Sigmoid colon (tissue), 7 donors: ENCODE measurements at regions of chr1 and their contacts with region 1.

Region 1: DNA sequence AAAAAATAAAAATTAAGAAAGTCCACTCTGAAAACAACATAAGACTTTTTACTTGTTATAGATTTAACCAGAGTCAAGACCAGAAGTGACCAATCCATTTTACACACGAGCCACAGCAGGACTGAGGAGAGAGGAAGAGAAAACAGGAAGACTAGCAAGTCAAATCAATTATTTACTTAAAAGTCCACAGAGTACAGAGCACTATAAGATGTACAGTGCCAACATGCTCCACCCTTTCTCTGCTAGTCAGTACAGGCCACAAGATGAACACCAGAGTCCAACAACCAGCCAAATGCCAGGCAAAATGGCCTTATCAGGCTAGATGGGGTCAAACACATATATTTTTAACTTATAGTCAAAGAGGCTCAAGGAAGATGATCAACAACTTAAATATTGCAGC is 19.5 kb downstream of the LUZP1 start:
- DNase-seq: no peak
- H3K4me3 ChIP-seq: no peak overlapping the region
- H3K27ac ChIP-seq: no peak overlapping the region
- H3K4me1 ChIP-seq: peaks cover 0 to 18% (median 15%) of the 10 kb centered on the region in 4 donors
- H3K27me3 ChIP-seq: no peaks in the 10 kb centered on the region
- CTCF ChIP-seq: no peak
- EP300 ChIP-seq: no peak
- POLR2A ChIP-seq: no peak

Region 2: DNA sequence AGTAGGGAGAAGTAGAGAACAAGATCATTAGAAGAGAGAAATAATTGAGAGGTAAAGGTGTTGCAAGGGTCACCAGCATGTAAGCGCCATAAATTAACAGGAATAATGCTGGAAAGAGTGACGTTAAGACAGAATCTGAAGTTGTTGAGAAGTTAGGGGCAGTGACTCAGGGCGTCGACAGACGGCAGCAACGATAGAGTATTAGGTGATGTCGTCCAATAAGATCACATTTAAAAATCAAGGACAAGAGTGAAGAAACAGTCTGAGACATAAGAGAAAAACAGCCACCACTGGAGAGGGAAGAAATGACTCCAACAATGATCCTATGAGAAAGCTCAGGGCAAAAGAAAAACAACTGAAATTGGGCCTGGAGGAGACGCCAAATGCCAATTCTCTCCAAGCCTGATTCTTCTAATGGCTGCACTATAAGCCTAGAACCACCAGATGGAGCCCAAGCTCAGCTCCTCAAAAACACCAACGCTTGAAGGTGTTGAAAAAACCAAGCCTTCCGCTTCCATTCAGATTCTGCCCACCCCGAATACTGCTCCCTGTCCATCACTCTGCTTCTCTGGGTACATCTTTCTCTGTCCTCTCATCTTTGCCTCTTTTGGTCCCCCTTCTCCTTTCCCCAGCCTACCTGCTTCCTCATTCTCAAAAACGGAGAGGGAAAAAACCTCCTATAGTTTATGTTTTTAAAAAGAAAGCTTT is 50.5 kb before region 1 on chr1:
- intact Hi-C with region 1: no loop called
- DNase-seq: peak; percentile 81
- H3K4me3 ChIP-seq: no peak overlapping the region
- H3K27ac ChIP-seq: peak overlapping the region in 2 of 4 donors; percentile 22 to 61
- H3K4me1 ChIP-seq: peaks cover 0 to 48% (median 42%) of the 10 kb centered on the region in 4 donors
- H3K27me3 ChIP-seq: no peaks in the 10 kb centered on the region
- CTCF ChIP-seq: peak; percentile 87 to 97 (median 92)
- EP300 ChIP-seq: no peak
- POLR2A ChIP-seq: no peak

Region 3: GRCh38 chr1:23108918-23109533 is 40.1 kb before region 1 on chr1:
- intact Hi-C with region 1: loop called (anchors 5 kb)
- DNase-seq: no peak
- H3K4me3 ChIP-seq: no peak overlapping the region
- H3K27ac ChIP-seq: no peak overlapping the region
- H3K4me1 ChIP-seq: peaks cover 0 to 11% (median 4%) of the 10 kb centered on the region in 4 donors
- H3K27me3 ChIP-seq: no peaks in the 10 kb centered on the region
- CTCF ChIP-seq: no peak
- EP300 ChIP-seq: no peak
- POLR2A ChIP-seq: no peak